Activated CD8-positive, alpha-beta T cell treated with anti-CD3 and anti-CD28 coated beads for 36 hours (primary cell): ENCODE measurements at regions of chr16 and their contacts with region 1.

Region 1: GRCh38 chr16:30747799-30748634 is at the start of gene PHKG2:
- DNase-seq: peak; percentile 99
- ATAC-seq: peak; percentile 99
- H3K4me3 Mint-ChIP-seq: peak within 1 kb of the TSS; percentile 90
- H3K27ac Mint-ChIP-seq: peak within 1 kb of the TSS; percentile 84
- H3K4me1 Mint-ChIP-seq: peaks cover 21% of the 10 kb centered on the region
- H3K27me3 Mint-ChIP-seq: no peaks in the 10 kb centered on the region
- CTCF ChIP-seq: no peak
- total RNA-seq, gene PHKG2: 27.8 to 30.3 TPM

Region 2: DNA sequence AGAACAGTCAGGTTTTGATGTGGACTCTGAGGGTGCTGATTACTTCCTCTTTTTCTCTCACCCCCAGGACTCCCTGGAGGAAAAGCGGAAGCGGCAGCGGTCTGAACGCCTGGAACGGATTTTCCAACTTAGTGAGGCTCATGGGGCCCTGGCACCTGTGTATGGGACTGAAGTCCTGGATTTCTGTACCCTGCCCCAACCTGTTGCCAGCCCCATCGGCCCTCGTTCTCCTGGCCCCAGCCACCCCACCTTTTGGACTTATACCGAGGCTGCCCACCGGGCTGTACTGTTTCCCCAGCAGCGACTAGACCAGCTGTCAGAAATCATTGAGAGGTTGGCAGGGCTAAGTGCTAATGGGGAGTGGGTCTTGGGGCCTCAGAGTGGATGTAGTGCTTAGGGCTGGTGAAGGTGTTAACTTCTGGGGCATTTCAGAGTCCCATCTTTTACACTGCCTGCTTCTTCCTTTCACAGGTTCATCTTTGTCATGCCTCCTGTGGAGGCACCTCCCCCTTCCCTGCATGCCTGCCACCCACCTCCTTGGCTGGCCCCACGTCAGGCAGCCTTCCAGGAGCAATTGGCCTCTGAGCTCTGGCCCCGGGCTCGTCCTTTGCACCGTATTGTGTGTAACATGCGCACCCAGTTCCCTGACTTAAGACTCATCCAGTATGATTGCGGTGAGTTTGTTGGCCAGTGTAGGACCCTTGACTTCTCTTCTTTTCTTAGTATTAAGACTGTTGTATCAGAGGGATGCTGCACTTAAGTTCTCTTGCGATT is 18.9 kb before region 1 on chr16:
- CTCF ChIA-PET with region 1: interaction called, 3 read pairs
- POLR2A ChIA-PET with region 1: interaction called, 10 read pairs
- intact Hi-C with region 1: no loop called
- DNase-seq: no peak
- ATAC-seq: no peak
- H3K4me3 Mint-ChIP-seq: no peak overlapping the region
- H3K27ac Mint-ChIP-seq: peak overlapping the region; percentile 39
- H3K4me1 Mint-ChIP-seq: peaks cover 13% of the 10 kb centered on the region
- H3K27me3 Mint-ChIP-seq: no peaks in the 10 kb centered on the region
- CTCF ChIP-seq: no peak

Region 3: DNA sequence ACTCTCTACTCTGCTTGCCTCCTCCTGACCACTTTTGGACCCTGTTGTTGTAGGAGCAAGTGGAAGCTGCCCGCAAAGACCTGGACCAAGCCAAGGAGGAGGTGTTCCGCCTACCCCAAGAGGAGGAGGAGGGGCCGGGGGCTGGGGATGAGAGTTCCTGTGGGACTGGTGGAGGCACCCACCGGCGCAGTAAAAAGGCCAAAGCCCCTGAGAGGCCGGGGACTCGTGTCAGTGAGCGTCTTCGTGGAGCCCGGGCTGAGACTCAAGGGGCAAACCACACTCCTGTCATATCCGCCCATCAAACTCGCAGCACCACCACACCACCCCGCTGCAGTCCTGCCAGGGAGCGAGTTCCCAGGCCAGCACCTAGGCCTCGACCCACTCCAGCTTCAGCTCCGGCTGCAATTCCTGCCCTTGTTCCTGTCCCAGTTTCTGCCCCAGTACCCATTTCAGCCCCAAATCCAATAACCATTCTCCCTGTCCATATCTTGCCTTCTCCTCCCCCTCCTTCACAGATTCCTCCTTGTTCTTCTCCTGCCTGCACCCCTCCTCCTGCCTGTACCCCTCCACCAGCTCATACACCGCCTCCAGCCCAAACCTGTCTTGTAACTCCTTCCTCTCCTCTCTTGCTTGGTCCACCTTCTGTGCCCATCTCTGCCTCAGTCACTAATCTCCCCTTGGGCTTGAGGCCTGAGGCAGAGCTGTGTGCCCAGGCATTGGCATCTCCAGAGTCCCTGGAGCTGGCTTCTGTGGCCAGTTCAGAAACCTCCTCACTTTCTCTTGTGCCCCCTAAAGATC is 10.8 kb before region 1 on chr16:
- CTCF ChIA-PET with region 1: no interaction called
- POLR2A ChIA-PET with region 1: interaction called, 12 read pairs
- intact Hi-C with region 1: no loop called
- DNase-seq: no peak
- ATAC-seq: no peak
- H3K4me3 Mint-ChIP-seq: no peak overlapping the region
- H3K27ac Mint-ChIP-seq: no peak overlapping the region
- H3K4me1 Mint-ChIP-seq: peaks cover 10% of the 10 kb centered on the region
- H3K27me3 Mint-ChIP-seq: no peaks in the 10 kb centered on the region
- CTCF ChIP-seq: no peak

Region 4: DNA sequence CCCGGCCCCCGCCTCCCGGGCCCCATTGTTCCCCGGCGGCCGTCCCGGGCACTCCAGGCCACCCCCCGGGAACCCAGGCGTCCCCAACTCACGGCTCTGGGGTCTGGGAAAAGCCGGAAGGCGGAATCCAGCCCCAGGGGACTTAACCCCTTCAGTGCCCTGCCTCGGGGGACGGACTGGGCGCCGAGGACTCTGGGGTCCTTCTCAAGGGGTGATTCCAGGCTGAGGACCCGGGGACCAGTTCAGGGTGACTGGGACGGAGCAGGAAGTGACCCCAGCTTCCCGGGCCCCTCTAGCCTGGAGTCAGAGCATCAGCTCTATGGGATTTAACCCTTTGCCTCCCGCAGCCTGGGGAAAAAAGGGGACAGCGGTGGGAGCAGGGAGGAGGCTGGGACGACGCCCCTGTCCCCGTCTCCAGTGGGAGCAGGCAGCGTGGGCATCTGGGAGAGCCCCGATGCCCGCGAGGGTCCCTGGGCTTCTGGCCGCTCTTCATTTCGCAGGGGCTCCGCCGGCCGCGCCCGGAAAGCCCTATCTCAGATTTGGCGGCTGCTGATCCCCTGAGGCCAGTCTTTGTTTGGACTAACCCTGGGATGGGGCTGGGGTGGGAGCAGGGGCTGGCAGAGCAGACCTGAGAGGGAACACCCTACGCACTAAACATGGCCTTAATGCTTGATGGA is 39.1 kb after region 1 on chr16 and contains the start of gene ZNF629:
- CTCF ChIA-PET with region 1: no interaction called
- POLR2A ChIA-PET with region 1: no interaction called
- intact Hi-C with region 1: no loop called
- DNase-seq: peak; percentile 30
- ATAC-seq: peak; percentile 60
- H3K4me3 Mint-ChIP-seq: peak within 1 kb of the TSS; percentile 83
- H3K27ac Mint-ChIP-seq: peak within 1 kb of the TSS; percentile 46
- H3K4me1 Mint-ChIP-seq: peaks cover 11% of the 10 kb centered on the region
- H3K27me3 Mint-ChIP-seq: no peaks in the 10 kb centered on the region
- CTCF ChIP-seq: no peak
- total RNA-seq, gene ZNF629: 2.8 to 3.2 TPM

Region 5: GRCh38 chr16:30805370-30806169 is 57.6 kb after region 1 on chr16:
- CTCF ChIA-PET with region 1: no interaction called
- POLR2A ChIA-PET with region 1: interaction called, 12 read pairs
- intact Hi-C with region 1: no loop called
- DNase-seq: peak; percentile 53
- ATAC-seq: peak; percentile 63
- H3K4me3 Mint-ChIP-seq: peak overlapping the region; percentile 63
- H3K27ac Mint-ChIP-seq: peak overlapping the region; percentile 66
- H3K4me1 Mint-ChIP-seq: peaks cover 18% of the 10 kb centered on the region
- H3K27me3 Mint-ChIP-seq: peaks cover 3% of the 10 kb centered on the region
- CTCF ChIP-seq: no peak